WTC11 (cell line): ENCODE measurements at regions of chr16 and their contacts with region 1.

Region 1: DNA sequence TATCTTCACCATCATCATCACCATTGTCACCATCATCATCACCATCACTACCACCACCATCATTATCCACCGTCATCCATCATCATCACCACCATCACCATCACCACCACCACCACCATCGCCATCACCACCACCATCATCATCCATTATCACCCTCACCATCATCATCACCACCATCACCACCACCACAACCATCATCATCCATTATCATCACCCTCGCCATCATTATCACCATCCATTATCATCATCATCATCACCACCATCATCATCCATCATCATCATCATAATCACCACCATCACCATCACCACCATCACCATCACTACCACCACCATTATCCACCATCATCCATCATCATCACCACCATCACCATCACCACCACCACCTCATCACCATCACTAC is 95.6 kb downstream of the C16orf95 start:
- DNase-seq: no peak
- ATAC-seq: no peak
- H3K4me3 Mint-ChIP-seq: no peak overlapping the region
- H3K27ac Mint-ChIP-seq: no peak overlapping the region
- H3K4me1 Mint-ChIP-seq: no peaks in the 10 kb centered on the region
- H3K27me3 Mint-ChIP-seq: no peaks in the 10 kb centered on the region
- CTCF ChIP-seq: no peak

Region 2: GRCh38 chr16:87012954-87013946 is 208.4 kb before region 1 on chr16:
- CTCF ChIA-PET with region 1: no interaction called
- POLR2A ChIA-PET with region 1: no interaction called
- DNase-seq: peak; percentile 19
- ATAC-seq: peak; percentile 24
- H3K4me3 Mint-ChIP-seq: no peak overlapping the region
- H3K27ac Mint-ChIP-seq: no peak overlapping the region
- H3K4me1 Mint-ChIP-seq: no peaks in the 10 kb centered on the region
- H3K27me3 Mint-ChIP-seq: no peaks in the 10 kb centered on the region
- CTCF ChIP-seq: no peak

Region 3: DNA sequence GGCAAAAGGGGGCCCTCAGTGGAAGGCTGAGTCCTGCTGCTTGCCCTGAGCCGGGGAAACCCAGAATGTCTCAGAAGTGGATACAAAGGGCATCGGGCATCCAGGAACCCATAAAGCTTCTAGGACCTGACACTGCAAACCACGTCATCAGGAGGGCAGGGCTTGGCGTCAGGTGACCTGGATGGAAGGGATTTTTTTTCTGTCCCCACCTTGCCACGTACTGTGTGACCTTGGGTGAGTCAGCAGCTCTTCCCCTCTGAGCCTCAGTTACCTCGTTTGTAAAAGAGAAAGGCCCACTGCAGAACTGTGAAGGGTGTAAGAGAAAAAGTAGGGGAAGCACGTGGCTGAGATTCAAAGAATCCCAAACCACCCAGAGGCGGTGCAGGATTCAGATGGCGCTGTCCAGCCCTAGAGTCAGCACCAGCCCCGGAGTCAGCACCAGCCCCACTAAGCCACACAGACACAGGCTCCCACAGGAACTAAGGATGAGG is 41.9 kb after region 1 on chr16:
- CTCF ChIA-PET with region 1: no interaction called
- POLR2A ChIA-PET with region 1: no interaction called
- DNase-seq: no peak
- ATAC-seq: no peak; the same call in 1 of the 2 replicates
- H3K4me3 Mint-ChIP-seq: no peak overlapping the region
- H3K27ac Mint-ChIP-seq: no peak overlapping the region
- H3K4me1 Mint-ChIP-seq: peaks cover 8% of the 10 kb centered on the region
- H3K27me3 Mint-ChIP-seq: peaks cover 3% of the 10 kb centered on the region; the same call in 1 of the 2 replicates
- CTCF ChIP-seq: no peak

Region 4: DNA sequence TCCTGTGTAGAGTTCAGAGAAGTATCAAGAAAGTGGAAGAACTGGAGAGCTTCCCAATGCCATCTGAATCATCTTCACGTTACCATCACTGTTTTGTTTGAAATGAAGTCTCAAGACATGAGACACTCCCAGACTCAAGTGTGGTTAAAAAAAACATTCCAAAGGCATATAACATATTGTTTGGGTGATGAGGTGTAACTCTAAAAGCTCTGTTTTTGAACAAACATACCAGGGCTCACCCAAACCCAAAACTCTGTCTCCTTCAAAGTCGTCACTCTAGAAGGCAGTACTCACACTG is 277.5 kb after region 1 on chr16:
- CTCF ChIA-PET with region 1: no interaction called
- POLR2A ChIA-PET with region 1: interaction called, 16 read pairs
- DNase-seq: no peak
- ATAC-seq: no peak
- H3K4me3 Mint-ChIP-seq: no peak overlapping the region
- H3K27ac Mint-ChIP-seq: no peak overlapping the region
- H3K4me1 Mint-ChIP-seq: peaks cover 5% of the 10 kb centered on the region; the same call in 1 of the 2 replicates
- H3K27me3 Mint-ChIP-seq: no peaks in the 10 kb centered on the region
- CTCF ChIP-seq: no peak